ENCODE measurements at regions of chr6 and their contacts with region 1.

Region 1: DNA sequence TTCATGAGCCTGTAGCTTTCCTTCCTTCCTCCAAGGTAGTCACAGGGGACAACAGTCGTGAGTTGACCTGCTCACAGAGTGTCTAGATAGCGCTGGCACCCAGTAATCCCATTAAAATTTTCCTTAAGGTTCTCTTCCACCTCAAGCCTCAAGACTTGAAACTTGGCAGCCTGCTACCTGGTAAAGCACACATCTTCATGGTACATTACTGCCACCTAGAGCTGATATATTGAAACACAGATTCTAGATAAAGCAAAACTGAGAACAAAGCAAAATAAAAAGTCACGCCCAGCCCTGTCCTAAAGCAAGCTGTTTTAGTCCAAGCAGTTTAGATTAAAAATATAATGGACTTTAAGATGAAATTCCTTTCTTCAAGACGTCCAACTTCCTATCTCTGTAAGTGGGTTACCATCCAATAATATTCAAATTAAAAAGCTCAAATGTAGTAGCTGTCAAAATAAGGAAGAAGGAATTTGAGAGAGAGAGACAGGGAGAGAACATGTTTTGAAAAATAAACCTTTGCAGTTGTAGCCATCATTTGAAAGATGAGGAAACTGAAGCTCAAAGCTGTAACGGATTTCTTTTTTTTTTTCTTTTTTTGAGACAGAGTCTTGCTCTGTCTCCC is 50.7 kb upstream of the CD83 start:
- DNase-seq: peak; percentile 27
- ATAC-seq: peak; percentile 88
- H3K4me3 Mint-ChIP-seq: no peak overlapping the region
- H3K27ac Mint-ChIP-seq: no peak overlapping the region
- H3K4me1 Mint-ChIP-seq: peaks cover 4% of the 10 kb centered on the region
- H3K27me3 Mint-ChIP-seq: peaks cover 10% of the 10 kb centered on the region

Region 2: DNA sequence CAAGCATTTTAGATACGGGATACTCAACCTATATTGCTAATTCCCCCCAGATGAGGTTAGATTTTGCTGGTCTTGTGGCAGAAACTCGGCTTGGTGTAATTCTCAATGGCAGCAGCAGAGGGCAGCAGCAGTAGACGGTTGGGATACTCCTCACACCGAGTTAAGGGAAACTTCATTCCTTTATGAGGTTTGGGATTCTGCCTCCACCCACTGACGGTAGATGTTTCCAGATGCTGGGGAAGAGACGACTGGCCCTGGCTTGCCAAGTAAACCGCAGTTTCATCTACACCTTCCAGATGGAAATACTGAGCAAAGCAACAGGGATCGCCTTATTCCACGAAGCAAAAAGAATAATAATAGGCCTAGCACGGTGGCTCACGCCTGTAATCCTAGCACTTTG is 730.3 kb before region 1 on chr6:
- CTCF ChIA-PET with region 1: interaction called, 3 read pairs
- POLR2A ChIA-PET with region 1: no interaction called
- intact Hi-C with region 1: loop called (anchors 2 kb)
- DNase-seq: peak; percentile 87
- ATAC-seq: peak; percentile 69
- H3K4me3 Mint-ChIP-seq: no peak overlapping the region
- H3K27ac Mint-ChIP-seq: no peak overlapping the region
- H3K4me1 Mint-ChIP-seq: peaks cover 10% of the 10 kb centered on the region
- H3K27me3 Mint-ChIP-seq: no peaks in the 10 kb centered on the region

Region 3: GRCh38 chr6:13873285-13874190 is 193.4 kb before region 1 on chr6:
- CTCF ChIA-PET with region 1: interaction called, 11 read pairs
- POLR2A ChIA-PET with region 1: no interaction called
- intact Hi-C with region 1: no loop called
- DNase-seq: peak; percentile 79
- ATAC-seq: peak; percentile 85
- H3K4me3 Mint-ChIP-seq: peak overlapping the region; percentile 54
- H3K27ac Mint-ChIP-seq: peak overlapping the region; percentile 44
- H3K4me1 Mint-ChIP-seq: peaks cover 8% of the 10 kb centered on the region
- H3K27me3 Mint-ChIP-seq: no peaks in the 10 kb centered on the region

Region 4: DNA sequence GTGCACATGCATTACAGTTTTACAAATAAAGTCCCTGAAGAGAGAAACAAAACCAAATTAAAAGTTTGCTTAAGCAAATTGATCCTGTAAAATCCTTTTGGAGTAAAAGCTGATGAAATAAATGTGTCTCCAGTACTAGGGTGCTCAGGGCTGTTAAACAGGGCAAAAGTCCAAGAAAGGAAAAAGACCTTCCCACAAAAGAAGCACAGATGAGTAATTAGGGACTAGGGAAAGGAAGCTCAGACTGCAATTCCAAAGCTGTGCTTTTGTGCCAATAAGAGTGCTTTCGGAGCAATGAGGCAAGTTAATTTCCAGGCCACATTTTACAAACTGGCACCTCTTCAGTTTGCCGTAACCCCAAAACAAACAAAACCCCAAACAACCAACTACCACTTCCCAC is 152.5 kb before region 1 on chr6:
- CTCF ChIA-PET with region 1: interaction called, 12 read pairs
- POLR2A ChIA-PET with region 1: no interaction called
- intact Hi-C with region 1: loop called (anchors 1 kb)
- DNase-seq: no peak
- ATAC-seq: no peak
- H3K4me3 Mint-ChIP-seq: no peak overlapping the region
- H3K27ac Mint-ChIP-seq: no peak overlapping the region
- H3K4me1 Mint-ChIP-seq: no peaks in the 10 kb centered on the region
- H3K27me3 Mint-ChIP-seq: peaks cover 29% of the 10 kb centered on the region

Region 5: DNA sequence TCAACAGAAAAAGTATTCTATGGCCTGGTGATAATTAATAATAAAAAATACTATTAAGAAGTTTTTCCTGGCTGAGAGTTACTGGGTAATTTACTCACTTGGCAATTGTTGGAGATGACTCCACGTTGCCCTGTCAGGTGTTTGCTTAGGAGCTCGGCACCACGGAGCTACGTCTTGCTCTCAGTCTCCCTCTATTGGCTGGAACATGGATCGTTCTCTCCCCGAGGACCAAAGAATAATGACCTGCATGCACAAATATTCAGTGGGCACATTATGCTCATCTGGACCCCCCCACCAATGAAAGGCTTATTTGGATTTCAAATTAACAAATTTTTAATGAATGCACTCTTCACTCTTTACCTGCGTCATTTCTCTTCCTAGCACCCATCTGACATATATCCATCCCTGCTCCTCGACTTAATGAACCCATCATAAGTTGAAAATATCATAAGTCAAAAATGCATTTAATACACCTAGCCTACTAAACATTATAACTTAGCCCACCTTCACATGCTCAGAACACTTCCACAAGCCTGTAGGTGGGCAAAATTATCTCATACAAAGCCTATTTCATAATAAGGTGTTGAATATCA is 20.3 kb before region 1 on chr6:
- CTCF ChIA-PET with region 1: interaction called, 98 read pairs
- POLR2A ChIA-PET with region 1: no interaction called
- intact Hi-C with region 1: loop called in 1 of 2 experiments (anchors 1 kb)
- DNase-seq: peak; percentile 70
- ATAC-seq: peak; percentile 95
- H3K4me3 Mint-ChIP-seq: no peak overlapping the region
- H3K27ac Mint-ChIP-seq: no peak overlapping the region
- H3K4me1 Mint-ChIP-seq: no peaks in the 10 kb centered on the region
- H3K27me3 Mint-ChIP-seq: peaks cover 22% of the 10 kb centered on the region

Region 6: DNA sequence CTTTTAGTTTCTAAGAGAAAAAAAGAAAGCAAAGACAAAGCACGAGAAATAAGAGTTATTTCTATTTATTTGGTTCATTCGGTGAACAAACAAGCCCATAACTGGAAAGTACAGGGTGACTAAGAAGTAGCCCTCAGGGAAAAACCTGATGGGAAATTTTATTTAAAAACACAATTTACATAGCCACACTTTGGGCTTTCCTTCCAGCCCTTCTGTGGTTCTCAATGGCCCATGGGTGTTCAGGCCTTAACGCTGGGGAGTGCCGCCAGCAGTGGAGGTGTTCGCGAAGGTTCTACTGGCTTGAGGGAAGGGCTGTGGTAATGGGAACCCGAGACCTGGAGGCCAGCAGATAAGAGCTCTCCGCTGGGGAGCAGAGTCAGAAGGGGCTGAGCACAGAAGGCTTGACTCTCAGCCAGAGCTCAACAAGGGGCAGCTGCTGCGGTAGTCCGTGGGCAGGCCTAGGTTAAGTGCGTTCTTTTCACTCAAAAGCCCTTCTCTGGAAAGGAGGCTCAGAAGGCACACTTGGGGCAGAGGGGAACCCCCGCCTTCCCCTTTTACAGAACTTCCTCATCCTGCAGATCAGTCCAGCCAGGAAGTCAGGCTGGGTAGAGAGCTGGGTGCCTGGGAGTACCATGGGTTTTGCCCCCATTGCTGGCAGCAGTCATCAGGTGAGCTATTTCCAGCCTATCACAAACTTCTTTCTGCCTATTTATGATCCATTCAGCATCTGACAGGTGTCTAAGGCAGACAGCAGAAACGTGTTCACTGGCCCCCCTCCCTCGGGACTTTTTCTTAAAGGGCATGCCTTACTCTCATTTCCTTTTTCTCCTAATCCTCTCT is 41.9 kb after region 1 on chr6:
- CTCF ChIA-PET with region 1: interaction called, 26 read pairs
- POLR2A ChIA-PET with region 1: no interaction called
- intact Hi-C with region 1: loop called in 1 of 2 experiments (anchors 2 kb)
- DNase-seq: peak; percentile 59
- ATAC-seq: peak; percentile 60
- H3K4me3 Mint-ChIP-seq: peak overlapping the region; percentile 17
- H3K27ac Mint-ChIP-seq: peak overlapping the region; percentile 70
- H3K4me1 Mint-ChIP-seq: peaks cover 32% of the 10 kb centered on the region
- H3K27me3 Mint-ChIP-seq: no peaks in the 10 kb centered on the region

Region 7: GRCh38 chr6:14151773-14152172 is 84.9 kb after region 1 on chr6:
- CTCF ChIA-PET with region 1: no interaction called
- POLR2A ChIA-PET with region 1: no interaction called
- intact Hi-C with region 1: no loop called
- DNase-seq: no peak
- ATAC-seq: no peak
- H3K4me3 Mint-ChIP-seq: no peak overlapping the region
- H3K27ac Mint-ChIP-seq: no peak overlapping the region
- H3K4me1 Mint-ChIP-seq: no peaks in the 10 kb centered on the region
- H3K27me3 Mint-ChIP-seq: no peaks in the 10 kb centered on the region